GM10248 (cell line): ENCODE measurements at regions of chr1 and their contacts with region 1.

Region 1: DNA sequence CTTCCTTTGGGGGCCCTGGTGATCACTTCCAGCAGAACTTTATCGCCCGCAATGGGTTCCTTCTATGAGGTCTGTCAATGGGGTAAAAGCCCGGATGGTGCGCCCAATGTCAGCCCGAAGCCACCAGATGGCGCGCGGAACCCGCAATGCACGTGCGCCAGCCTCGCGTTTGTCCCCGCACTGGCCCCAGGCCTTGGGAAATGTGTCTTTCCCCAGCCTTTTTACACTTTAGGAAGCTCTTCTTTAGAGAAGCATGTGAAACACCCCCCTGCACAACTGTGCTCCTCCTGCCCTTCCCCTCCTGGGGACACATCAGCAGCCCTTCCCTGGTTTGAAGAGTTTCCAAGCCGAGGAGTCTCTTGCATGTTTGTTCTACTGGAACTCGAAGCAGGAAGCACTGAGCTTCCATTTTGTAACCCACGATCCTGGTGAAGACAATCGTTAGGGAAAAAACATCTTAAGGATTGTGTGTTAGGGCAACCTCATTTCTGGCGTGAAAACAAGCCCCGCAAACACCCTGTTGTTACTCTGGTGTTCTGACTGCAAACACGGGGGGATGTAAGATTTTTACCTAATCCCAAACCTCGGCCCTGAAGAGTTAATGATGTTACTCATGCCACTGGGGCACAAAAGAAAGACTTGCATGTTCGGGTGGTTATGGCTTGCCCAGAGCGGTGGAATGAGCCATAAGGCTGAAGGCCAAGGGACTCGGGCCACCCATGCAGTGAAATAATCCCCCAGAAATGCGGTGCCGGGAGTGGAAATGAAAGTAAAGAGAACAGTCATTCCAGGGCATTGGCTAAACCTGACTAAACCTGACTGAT is 20.4 kb upstream of the TARBP1 start:
- DNase-seq: peak; percentile 78
- CTCF ChIP-seq: peak; percentile 87

Region 2: DNA sequence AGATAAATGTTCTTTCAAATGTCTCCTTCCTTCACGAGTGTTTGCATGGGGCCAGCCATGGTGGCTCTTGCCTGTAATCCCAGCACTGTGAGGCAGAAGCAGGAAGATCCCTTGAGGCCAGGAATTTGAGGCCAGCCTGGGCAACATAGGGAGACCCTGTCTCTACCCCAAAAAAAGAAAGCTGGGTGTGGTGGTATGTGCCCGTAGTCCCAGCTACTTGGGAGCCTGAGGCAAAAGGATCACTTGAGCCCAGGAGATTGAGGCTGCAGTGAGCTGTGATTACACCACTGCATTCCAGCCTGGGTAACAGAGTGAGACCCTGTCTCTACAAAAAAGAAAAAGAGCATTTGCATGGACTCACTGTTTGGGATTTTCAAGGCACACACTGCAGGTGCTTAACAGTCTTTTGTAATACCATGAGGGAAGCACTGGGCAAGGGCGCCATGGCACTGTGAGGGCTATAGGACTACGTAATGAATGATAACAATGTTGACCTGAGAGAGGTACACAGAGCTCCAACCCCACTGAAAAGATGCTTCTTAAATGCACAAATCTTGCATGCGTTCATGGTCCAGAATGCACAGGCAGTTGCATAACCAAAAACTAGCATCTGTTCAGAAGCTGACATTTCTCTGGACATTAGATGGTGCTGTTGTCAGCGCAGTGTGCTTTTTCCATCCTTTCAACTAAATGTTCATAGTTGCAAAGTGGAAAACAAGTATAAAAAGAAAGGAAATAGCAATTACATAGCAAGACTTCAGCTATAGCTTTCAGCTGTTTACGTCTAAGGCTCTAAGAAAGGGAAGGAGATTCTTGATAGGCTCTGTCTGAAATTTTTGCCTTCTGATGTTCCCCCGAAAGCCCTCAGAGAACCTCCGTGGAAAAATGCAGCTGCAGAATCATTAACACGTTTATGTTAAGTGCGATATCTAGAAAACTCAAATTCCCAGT is 12.6 kb before region 1 on chr1:
- CTCF ChIA-PET with region 1: interaction called, 26 read pairs
- POLR2A ChIA-PET with region 1: no interaction called
- DNase-seq: no peak
- CTCF ChIP-seq: peak; percentile 66

Region 3: DNA sequence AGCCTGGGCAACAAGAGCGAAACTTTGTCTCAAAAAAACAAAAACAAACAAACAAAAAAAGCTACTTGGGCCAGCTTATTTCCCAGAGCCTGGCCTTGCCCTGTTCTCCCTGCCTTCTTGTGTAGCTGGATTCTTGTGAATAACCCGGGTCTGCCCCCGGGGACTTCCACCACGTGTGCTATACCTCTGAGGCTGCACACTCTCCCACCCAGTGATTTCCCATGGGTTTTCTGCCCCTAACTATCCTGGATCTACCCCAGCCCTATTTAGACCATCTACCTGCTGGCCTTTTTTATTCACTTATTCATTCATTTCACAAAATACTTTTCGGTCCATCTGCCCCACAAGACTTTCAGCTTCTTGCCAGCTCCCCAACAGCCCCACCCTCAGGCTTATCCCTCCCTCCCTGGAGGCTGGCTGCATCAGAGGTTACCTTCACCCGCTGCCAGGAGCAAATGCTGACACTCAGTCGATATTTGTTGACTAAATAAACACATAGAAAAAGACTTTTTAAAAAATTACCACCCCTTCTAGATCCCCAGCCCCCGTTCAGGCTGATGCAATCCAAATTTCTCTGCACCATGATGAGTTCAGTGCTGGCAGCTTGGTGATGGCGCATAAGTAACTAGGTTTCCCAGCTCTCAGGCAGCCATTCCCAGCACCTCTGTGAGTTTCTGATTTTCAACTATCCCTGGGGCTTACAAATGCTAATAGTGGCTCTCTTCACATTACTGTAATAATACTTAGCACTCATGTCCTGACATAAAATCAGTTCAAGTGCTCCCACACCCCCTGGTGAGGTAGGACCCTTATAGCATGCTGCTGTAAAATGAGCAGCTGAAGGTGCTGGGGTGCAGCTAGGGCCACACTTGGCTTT is 10.4 kb after region 1 on chr1:
- CTCF ChIA-PET with region 1: interaction called, 15 read pairs
- POLR2A ChIA-PET with region 1: no interaction called
- DNase-seq: no peak
- CTCF ChIP-seq: no peak

Region 4: DNA sequence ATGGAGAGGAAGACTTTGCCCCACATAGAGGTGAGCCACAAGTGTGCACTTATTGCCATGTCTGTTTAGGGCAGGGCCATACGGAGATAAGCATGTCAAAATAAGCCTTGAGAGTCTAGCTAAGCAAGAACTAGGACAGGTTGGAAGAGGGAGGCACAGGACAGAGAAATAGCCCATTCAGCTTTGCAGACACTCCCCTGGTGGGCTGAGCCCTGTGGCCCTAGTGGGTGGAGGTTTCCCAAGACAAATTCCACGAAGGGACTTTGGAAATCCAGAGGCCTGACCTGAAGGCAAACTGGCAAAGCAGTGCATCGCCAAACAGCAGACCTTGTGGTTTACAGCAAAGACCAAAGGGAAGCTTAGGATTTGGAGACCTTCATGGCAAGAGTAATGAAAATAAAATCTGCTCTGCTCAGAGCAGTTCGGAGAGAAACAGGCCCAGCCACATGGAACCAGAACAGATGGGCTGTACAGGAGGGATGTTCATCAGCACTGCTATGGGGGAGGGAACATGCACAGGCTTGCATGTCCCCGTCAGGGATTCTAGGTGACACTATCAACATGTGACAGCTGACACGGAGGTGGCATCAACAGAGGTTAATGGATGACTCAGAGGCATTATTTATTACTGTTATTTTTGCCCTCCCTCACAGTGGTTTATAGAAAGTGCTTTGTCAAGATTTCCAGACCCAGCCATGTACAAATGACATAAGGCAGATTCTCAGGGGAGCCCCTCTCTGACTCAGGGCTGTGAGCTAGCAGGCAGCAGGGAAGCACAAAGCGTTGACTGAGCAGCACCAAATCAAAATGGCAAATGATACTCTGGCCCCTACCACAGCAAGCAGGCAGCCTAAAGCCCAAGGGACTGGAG is 200.7 kb after region 1 on chr1:
- CTCF ChIA-PET with region 1: no interaction called
- POLR2A ChIA-PET with region 1: no interaction called
- DNase-seq: peak; percentile 68
- CTCF ChIP-seq: no peak